Sciatic nerve (tissue), 2 donors: ENCODE measurements at regions of chr19 and their contacts with region 1.

Region 1: GRCh38 chr19:44889830-44890365 is 1.2 kb upstream of the TOMM40 start:
- DNase-seq: no peak
- ATAC-seq: no peak

Region 2: GRCh38 chr19:44850641-44851109 is 39.2 kb before region 1 on chr19:
- intact Hi-C with region 1: loop called (anchors 5 kb)
- DNase-seq: no peak
- ATAC-seq: no peak

Region 3: DNA sequence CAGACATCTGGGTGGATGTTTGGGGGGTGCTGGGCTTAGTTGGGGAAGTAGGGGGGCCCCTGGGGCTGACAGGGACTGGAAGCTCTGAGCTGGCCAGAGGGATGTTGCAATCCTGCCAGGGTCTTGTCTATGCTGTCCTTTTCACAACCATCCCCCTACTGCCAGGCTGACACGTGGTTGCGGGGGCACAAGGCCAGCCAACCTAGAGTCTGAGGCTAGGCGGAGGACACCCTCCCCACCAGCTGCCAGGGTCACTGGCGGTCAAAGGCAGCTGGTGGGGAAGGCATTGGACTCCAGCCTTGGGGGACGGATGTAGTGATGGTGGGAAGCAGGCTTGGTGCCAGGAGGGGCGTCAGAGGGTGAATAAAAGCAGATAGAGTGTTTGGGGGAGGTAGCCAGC is 23.0 kb after region 1 on chr19:
- intact Hi-C with region 1: no loop called
- DNase-seq: peak; percentile 72
- ATAC-seq: peak; percentile 53

Region 4: DNA sequence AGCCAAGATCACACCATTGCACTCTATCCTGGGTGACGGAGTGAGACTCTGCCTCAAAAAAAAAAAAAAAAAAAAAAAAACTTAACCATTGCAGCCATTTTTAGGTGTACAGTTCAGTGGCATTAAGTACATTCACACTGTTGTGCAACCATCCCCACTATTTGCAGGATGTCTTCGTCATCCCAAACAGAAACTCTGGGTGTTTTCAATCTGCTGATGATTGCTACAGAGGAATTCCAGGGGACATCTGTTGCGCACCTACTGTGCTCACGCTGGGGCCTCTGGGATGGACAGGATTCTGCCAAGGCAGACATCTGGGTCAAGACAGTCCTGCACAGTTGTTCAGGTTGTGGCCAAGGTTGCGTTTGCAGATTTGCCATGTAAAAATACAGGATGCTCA is 49.8 kb after region 1 on chr19:
- intact Hi-C with region 1: no loop called
- DNase-seq: no peak
- ATAC-seq: no peak

Region 5: DNA sequence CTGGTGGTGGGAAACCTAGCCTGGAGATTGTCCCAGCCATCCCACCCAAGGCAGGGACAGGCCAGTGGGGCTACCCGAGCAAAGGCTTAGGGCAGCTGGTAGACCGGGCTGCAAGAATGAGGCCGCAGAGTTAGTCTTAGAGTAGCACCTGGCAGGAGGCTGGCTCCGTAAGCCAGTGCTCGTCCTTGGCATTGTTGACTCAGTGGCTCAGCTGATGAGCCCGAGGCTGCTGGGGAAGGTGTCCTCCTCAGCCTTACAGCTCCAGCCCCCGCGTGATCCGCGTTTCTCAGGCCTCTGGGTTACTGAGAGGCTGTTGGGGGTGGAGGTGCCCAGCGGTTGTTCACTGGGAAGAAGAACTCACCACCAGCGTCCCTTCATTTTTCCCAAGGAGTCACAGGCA is 227.8 kb after region 1 on chr19:
- intact Hi-C with region 1: no loop called
- DNase-seq: no peak
- ATAC-seq: no peak